IMR-90 (cell line): ENCODE measurements at regions of chr18 and their contacts with region 1.

Region 1: DNA sequence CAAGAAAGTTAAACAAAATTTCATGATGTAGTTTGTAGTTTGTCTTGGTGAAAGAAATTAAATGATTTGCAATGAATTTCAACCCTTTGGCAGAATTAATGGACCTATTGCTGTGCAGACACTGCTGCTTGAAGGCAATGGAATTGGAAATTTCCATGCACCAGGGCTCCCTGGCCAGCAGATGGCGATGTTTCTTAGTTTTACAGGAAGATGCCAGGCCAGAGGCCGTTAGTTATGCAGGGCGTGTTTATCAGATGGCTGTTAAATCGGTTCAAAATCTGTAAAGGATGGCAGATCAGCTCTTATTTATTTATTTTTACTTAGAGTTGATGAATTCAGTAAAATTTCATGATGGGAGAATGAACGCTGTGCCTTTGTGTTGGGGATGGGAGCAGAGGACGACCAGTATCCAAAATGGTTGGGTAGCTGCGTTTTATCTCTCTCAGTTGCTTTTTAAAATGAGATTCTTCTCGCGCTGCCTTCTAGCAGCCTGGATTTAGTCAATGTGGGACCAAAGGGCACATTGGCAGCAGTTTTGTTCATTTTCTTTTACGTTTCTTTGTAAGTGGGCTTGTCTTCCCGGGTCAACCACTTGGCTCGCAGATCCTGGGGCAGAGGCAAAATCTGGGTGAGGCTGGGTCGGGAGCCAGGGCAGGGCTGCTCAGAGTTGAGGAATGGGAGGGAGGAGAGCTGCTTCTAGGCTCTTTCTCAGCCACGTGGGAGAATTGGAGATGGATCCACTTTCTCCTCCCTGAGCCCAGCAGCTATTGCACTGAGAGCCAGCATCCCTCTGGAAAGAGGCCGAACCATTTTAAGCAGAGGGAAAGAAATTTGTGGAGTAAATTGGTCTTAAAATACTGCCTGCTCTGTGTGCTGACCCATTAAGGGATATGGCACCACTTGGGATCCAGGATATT is 344.0 kb downstream of the PIK3C3 start:
- DNase-seq: peak; percentile 66
- ATAC-seq: peak; percentile 89
- H3K4me3 ChIP-seq: no peak overlapping the region
- H3K27ac ChIP-seq: no peak overlapping the region
- H3K4me1 ChIP-seq: no peaks in the 10 kb centered on the region
- H3K27me3 ChIP-seq: no peaks in the 10 kb centered on the region
- CTCF ChIP-seq: peak; percentile 81
- POLR2A ChIP-seq: no peak
- RAD21 ChIP-seq: peak; percentile 63

Region 2: DNA sequence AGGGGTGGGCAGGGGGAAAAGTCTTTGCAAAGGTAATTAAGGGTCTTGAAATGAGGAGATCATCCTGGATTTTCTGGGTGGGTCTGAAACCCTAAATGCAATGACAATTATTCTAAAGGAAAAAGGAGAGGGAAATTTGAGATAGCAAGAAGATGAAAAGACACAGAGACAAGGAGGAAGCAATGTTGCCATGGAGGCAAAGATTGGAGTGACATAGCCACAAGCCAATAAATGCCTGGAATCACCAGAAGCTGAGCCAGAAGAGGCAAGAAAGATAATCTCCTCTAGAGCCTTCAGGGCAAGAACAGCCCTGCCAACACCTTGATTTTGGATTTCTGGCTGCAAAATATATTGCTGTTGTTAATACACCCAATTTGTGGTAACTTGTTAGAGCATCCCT is 1590.3 kb before region 1 on chr18:
- CTCF ChIA-PET with region 1: no interaction called
- POLR2A ChIA-PET with region 1: no interaction called
- dilution Hi-C with region 1: no loop called
- in situ Hi-C with region 1: no loop called
- intact Hi-C with region 1: no loop called
- DNase-seq: no peak
- ATAC-seq: no peak
- H3K4me3 ChIP-seq: no peak overlapping the region
- H3K27ac ChIP-seq: no peak overlapping the region
- H3K4me1 ChIP-seq: no peaks in the 10 kb centered on the region
- H3K27me3 ChIP-seq: no peaks in the 10 kb centered on the region
- CTCF ChIP-seq: no peak
- POLR2A ChIP-seq: no peak
- RAD21 ChIP-seq: no peak

Region 3: GRCh38 chr18:42164556-42164955 is 134.5 kb before region 1 on chr18:
- CTCF ChIA-PET with region 1: no interaction called
- POLR2A ChIA-PET with region 1: no interaction called
- dilution Hi-C with region 1: no loop called
- in situ Hi-C with region 1: no loop called
- intact Hi-C with region 1: no loop called
- DNase-seq: no peak
- ATAC-seq: no peak
- H3K4me3 ChIP-seq: no peak overlapping the region
- H3K27ac ChIP-seq: no peak overlapping the region
- H3K4me1 ChIP-seq: no peaks in the 10 kb centered on the region
- H3K27me3 ChIP-seq: no peaks in the 10 kb centered on the region
- CTCF ChIP-seq: no peak
- POLR2A ChIP-seq: no peak
- RAD21 ChIP-seq: no peak

Region 4: DNA sequence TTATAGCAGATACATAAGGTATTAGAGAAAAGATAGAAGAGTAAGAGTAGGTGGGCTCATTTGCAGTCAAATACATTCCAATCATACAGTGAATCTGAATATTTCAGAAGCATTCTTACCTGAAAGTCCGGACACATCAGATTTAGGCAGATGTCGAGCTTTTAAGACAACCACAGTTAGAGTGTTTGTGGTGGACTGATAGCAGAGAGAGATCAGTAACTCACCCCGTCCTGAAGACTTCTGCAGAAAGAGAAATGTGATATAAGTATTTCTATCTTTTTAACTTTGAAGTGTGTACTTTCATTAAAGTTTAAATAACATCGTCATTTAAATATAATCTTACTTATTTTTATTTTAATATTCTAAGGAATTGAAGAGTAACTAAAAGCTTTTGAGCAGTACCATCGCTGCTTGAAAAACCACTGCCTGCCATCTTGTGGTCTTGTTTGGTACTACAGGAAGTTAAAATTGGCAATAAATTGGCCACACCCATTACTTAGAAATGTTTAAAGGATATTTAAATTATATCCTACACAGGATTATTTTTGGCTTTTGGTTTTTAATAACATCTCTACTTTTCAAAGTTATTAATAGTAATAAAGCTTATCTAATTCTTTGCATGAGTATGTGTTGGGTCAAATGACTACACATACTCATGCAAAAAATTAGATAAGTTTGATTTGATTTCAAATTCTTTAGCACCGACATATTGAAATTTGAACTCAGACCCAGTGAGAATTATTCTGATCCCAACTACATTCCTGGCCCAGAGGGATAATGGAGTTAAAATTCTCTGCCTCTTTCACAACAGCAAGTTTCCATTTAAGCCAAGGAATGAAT is 972.8 kb after region 1 on chr18:
- CTCF ChIA-PET with region 1: interaction called, 5 read pairs
- POLR2A ChIA-PET with region 1: no interaction called
- dilution Hi-C with region 1: no loop called
- in situ Hi-C with region 1: loop called (anchors 25 kb)
- intact Hi-C with region 1: loop called (anchors 1 kb)
- DNase-seq: peak; percentile 61
- ATAC-seq: peak; percentile 72
- H3K4me3 ChIP-seq: no peak overlapping the region
- H3K27ac ChIP-seq: no peak overlapping the region
- H3K4me1 ChIP-seq: no peaks in the 10 kb centered on the region
- H3K27me3 ChIP-seq: no peaks in the 10 kb centered on the region
- CTCF ChIP-seq: peak; percentile 70
- POLR2A ChIP-seq: no peak
- RAD21 ChIP-seq: peak; percentile 61

Region 5: DNA sequence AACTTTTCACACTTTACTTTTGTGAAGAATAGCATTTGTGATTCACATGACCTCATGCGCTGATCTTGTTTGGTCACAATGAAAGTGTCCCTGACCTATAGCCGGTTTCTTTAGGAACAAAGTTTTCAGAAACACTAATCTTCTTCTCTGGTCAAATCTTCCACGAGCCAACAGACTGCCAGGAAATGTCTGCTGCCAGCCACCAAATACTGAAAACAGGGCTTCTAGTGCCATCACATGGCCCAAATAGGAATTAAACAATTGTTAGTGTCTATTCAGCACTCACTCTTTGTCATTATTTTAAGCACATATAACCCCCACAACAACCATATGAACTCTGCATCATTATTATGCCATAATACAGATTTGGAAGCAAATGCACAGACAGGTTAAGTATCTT is 1264.8 kb after region 1 on chr18:
- CTCF ChIA-PET with region 1: no interaction called
- POLR2A ChIA-PET with region 1: no interaction called
- dilution Hi-C with region 1: no loop called
- in situ Hi-C with region 1: no loop called
- intact Hi-C with region 1: loop called (anchors 2 kb)
- DNase-seq: peak; percentile 6
- ATAC-seq: peak; percentile 72
- H3K4me3 ChIP-seq: no peak overlapping the region
- H3K27ac ChIP-seq: no peak overlapping the region
- H3K4me1 ChIP-seq: no peaks in the 10 kb centered on the region
- H3K27me3 ChIP-seq: no peaks in the 10 kb centered on the region
- CTCF ChIP-seq: peak; percentile 32
- POLR2A ChIP-seq: no peak
- RAD21 ChIP-seq: peak; percentile 52